ENCODE measurements at regions of chr7 and their contacts with region 1.

Region 1: GRCh38 chr7:113289140-113289740 is 170.9 kb upstream of the SMIM30 start:
- DNase-seq: peak; percentile 64
- H3K4me3 ChIP-seq: no peak overlapping the region
- H3K27ac ChIP-seq: no peak overlapping the region
- H3K4me1 ChIP-seq: no peaks in the 10 kb centered on the region
- H3K27me3 ChIP-seq: no peaks in the 10 kb centered on the region
- CTCF ChIP-seq: peak; percentile 51 to 84

Region 2: DNA sequence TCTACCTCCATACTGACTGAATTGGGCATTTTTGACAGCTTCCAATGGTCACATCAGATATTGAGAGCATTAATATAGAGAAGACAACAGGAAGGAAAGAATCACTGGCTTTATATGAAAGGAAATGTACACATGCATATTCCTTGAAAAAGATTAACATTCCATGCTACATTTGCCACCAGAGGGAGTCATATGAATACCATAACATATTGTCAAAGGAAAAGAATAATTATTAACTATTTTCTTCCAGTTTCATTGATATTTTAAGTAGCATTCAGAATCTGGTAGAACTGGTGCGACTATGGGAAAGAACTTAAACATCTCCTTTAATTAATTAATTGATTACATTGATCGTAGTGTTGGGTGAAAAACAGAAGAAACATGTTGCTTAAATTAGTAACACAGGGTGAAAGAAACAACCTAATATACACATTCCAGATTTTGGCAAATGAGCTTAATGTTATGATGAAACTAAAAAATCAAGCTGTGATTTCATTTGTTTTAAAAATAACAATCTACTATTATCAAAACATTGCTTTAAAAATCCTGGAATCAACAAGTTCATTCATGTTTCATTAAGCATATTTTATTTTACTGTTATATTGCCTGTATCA is 274.1 kb before region 1 on chr7:
- CTCF ChIA-PET with region 1: no interaction called
- dilution Hi-C with region 1: no loop called
- in situ Hi-C with region 1: loop called (anchors 25 kb)
- intact Hi-C with region 1: loop called (anchors 1 kb)
- DNase-seq: peak; percentile 27
- H3K4me3 ChIP-seq: no peak overlapping the region
- H3K27ac ChIP-seq: no peak overlapping the region
- H3K4me1 ChIP-seq: peaks cover 12% of the 10 kb centered on the region
- H3K27me3 ChIP-seq: no peaks in the 10 kb centered on the region
- CTCF ChIP-seq: peak; percentile 42 to 58

Region 3: GRCh38 chr7:113159746-113160339 is 129.4 kb before region 1 on chr7:
- CTCF ChIA-PET with region 1: interaction called, 39 read pairs
- dilution Hi-C with region 1: no loop called
- in situ Hi-C with region 1: loop called in 1 of 2 experiments (anchors 10 kb)
- intact Hi-C with region 1: loop called (anchors 1 kb)
- DNase-seq: peak; percentile 21
- H3K4me3 ChIP-seq: no peak overlapping the region
- H3K27ac ChIP-seq: no peak overlapping the region
- H3K4me1 ChIP-seq: no peaks in the 10 kb centered on the region
- H3K27me3 ChIP-seq: no peaks in the 10 kb centered on the region
- CTCF ChIP-seq: peak; percentile 59 to 82

Region 4: GRCh38 chr7:114182837-114183236 is 893.6 kb after region 1 on chr7:
- CTCF ChIA-PET with region 1: no interaction called
- dilution Hi-C with region 1: no loop called
- in situ Hi-C with region 1: no loop called
- intact Hi-C with region 1: no loop called
- DNase-seq: no peak
- H3K4me3 ChIP-seq: no peak overlapping the region
- H3K27ac ChIP-seq: no peak overlapping the region
- H3K4me1 ChIP-seq: peaks cover 4% of the 10 kb centered on the region
- H3K27me3 ChIP-seq: no peaks in the 10 kb centered on the region
- CTCF ChIP-seq: no peak